MCF 10A (cell line): ENCODE measurements at regions of chr4 and their contacts with region 1.

Region 1: DNA sequence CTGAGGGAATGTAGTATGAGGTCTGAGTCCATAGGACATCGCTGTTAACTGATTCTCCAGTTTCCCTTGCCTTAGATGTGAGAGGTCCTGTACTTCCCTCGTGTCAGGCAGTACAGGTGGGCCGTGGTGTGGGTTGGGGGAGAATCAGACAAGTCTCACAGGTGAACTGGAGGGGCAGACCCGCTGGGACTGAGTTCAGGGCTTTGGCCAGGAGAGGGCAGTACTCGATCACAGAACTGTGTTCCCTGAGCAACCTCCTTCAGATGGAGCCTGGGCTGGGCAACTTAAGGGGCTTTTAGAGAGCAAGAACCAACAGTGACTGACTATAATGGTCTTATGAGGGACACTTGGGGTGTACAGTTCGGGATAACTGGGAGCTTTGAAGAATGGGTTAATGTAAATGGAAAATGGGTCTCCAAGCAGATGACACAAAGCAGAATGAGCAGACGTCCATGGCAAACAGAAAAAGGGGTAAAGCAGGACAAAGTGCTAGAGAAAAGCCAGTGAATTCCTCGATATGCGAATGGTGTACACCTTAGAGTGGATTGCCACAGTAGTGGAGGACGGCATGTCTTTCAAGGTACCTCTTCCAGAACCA is 83.6 kb downstream of the CCNG2 start:
- DNase-seq: peak; percentile 69
- H3K4me3 Mint-ChIP-seq: no peak overlapping the region
- H3K27ac Mint-ChIP-seq: no peak overlapping the region
- H3K4me1 Mint-ChIP-seq: no peaks in the 10 kb centered on the region
- H3K27me3 Mint-ChIP-seq: peaks cover 23% of the 10 kb centered on the region
- CTCF ChIP-seq: peak; percentile 86

Region 2: GRCh38 chr4:76781698-76782595 is 458.6 kb before region 1 on chr4:
- CTCF ChIA-PET with region 1: no interaction called
- POLR2A ChIA-PET with region 1: no interaction called
- intact Hi-C with region 1: no loop called
- DNase-seq: peak; percentile 98
- H3K4me3 Mint-ChIP-seq: peak overlapping the region; percentile 62
- H3K27ac Mint-ChIP-seq: peak overlapping the region; percentile 99
- H3K4me1 Mint-ChIP-seq: peaks cover 28% of the 10 kb centered on the region
- H3K27me3 Mint-ChIP-seq: no peaks in the 10 kb centered on the region
- CTCF ChIP-seq: no peak

Region 3: DNA sequence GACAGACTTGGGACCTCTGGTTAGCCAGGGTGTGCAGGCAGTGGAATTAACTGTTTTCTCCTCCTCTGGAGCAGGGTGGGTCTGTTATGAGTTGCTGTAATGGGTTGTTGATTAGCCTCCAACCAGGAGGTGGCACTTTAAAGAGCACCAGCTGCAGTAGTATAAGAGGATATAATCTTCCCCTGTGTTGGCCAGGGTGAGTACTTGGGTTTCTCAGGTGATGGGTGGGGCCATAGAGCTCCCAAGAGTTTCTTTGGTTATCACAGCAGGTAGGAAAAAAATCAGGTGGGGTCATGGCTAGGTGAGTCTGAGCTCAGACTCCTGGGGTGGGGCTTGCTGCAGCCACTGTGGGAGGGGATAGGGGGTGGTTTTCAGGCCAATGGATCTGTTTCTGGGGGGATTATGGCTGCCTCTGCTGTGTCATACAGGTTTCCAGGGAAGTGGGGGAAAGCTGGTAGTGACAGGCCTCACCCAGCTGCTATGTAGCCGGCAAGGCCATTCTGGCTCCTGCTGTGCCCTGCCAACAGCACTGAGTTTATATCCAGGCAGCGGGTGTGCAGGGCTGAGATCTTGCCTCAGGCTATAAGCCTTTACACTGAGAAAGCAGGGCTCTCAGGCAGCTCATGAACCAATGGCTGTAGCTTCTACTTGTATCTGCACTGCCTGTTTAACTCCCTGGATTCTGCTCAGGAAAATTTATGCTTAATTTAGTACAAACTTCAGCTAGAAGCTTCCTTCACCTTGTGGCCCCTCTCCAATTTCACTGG is 13.4 kb before region 1 on chr4:
- CTCF ChIA-PET with region 1: interaction called, 28 read pairs
- POLR2A ChIA-PET with region 1: no interaction called
- intact Hi-C with region 1: no loop called
- DNase-seq: no peak
- H3K4me3 Mint-ChIP-seq: no peak overlapping the region
- H3K27ac Mint-ChIP-seq: no peak overlapping the region
- H3K4me1 Mint-ChIP-seq: peaks cover 8% of the 10 kb centered on the region
- H3K27me3 Mint-ChIP-seq: no peaks in the 10 kb centered on the region
- CTCF ChIP-seq: no peak

Region 4: GRCh38 chr4:77263247-77263646 is 22.7 kb after region 1 on chr4:
- CTCF ChIA-PET with region 1: interaction called, 25 read pairs
- POLR2A ChIA-PET with region 1: no interaction called
- intact Hi-C with region 1: no loop called
- DNase-seq: no peak
- H3K4me3 Mint-ChIP-seq: no peak overlapping the region
- H3K27ac Mint-ChIP-seq: no peak overlapping the region
- H3K4me1 Mint-ChIP-seq: no peaks in the 10 kb centered on the region
- H3K27me3 Mint-ChIP-seq: no peaks in the 10 kb centered on the region
- CTCF ChIP-seq: no peak

Region 5: DNA sequence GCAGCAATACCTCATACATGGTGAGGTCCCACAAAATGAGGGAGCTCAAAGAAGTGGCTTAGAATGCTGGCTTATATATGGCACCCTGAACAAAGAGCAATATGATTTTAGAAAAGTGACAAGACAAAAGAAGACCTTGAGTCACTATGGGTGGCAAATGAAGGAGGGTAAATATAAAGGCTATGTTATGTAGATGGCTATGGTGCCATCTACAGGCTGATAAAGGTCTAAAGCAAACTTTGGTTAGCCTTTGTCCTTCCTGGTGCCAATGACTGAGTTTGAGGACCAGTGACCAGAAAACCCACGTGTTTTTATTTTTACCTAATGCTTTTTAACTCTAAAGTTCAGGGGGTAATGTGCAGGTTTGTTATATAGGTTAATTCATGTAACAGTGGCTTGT is 68.3 kb after region 1 on chr4:
- CTCF ChIA-PET with region 1: interaction called, 243 read pairs
- POLR2A ChIA-PET with region 1: interaction called, 8 read pairs
- intact Hi-C with region 1: loop called (anchors 1 kb)
- DNase-seq: peak; percentile 62
- H3K4me3 Mint-ChIP-seq: no peak overlapping the region
- H3K27ac Mint-ChIP-seq: no peak overlapping the region
- H3K4me1 Mint-ChIP-seq: peaks cover 7% of the 10 kb centered on the region
- H3K27me3 Mint-ChIP-seq: no peaks in the 10 kb centered on the region
- CTCF ChIP-seq: peak; percentile 52

Region 6: GRCh38 chr4:77347341-77347966 is 106.9 kb after region 1 on chr4:
- CTCF ChIA-PET with region 1: interaction called, 84 read pairs
- POLR2A ChIA-PET with region 1: no interaction called
- intact Hi-C with region 1: no loop called
- DNase-seq: no peak
- H3K4me3 Mint-ChIP-seq: no peak overlapping the region
- H3K27ac Mint-ChIP-seq: no peak overlapping the region
- H3K4me1 Mint-ChIP-seq: peaks cover 15% of the 10 kb centered on the region
- H3K27me3 Mint-ChIP-seq: no peaks in the 10 kb centered on the region
- CTCF ChIP-seq: no peak

Region 7: DNA sequence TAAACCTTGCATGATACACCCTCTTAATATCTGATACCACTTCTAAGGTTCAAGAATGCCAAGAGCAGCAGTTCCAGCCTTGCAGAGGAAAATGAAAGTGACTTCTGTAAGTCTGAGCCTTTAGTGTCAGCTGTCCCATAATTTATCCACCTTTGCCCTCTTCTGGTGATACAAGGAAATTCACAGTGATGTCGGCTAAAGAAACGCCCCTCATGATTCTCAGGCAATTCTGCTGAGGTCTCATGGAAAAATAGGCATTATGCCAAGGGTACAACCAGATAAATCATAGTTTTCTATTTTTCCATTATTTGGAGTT is 192.8 kb after region 1 on chr4:
- CTCF ChIA-PET with region 1: interaction called, 3 read pairs
- POLR2A ChIA-PET with region 1: no interaction called
- intact Hi-C with region 1: loop called (anchors 2 kb)
- DNase-seq: peak; percentile 72
- H3K4me3 Mint-ChIP-seq: no peak overlapping the region
- H3K27ac Mint-ChIP-seq: no peak overlapping the region
- H3K4me1 Mint-ChIP-seq: no peaks in the 10 kb centered on the region
- H3K27me3 Mint-ChIP-seq: no peaks in the 10 kb centered on the region
- CTCF ChIP-seq: peak; percentile 64

Region 8: DNA sequence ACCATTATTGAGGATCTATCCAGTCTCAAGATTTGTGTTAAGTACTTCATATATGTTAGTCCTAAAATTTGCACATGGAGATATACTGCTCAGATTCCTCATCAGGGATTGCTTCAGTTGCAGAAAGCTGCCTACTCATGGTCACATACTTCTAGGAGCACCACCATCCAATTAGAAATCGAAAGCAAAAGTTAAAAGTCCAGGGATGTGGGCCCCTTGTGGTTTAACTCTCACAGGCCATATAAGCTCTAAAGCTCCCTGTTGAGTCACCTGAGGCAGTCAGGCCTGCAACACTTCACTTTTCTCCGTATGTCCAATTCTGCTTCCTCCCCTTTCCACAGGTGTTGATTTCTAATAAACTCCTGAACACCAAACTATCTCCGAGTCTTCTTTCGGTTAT is 494.4 kb after region 1 on chr4:
- CTCF ChIA-PET with region 1: no interaction called
- POLR2A ChIA-PET with region 1: no interaction called
- intact Hi-C with region 1: no loop called
- DNase-seq: peak; percentile 38
- H3K4me3 Mint-ChIP-seq: no peak overlapping the region
- H3K27ac Mint-ChIP-seq: no peak overlapping the region
- H3K4me1 Mint-ChIP-seq: peaks cover 5% of the 10 kb centered on the region
- H3K27me3 Mint-ChIP-seq: no peaks in the 10 kb centered on the region
- CTCF ChIP-seq: no peak